Activated CD4-positive, alpha-beta memory T cell treated with anti-CD3 and anti-CD28 coated beads, Interleukin-2, amount 10 ng/mL, durations not matched to agents 7 days and 5 days (primary cell): ENCODE measurements at regions of chr19 and their contacts with region 1.

Region 1: DNA sequence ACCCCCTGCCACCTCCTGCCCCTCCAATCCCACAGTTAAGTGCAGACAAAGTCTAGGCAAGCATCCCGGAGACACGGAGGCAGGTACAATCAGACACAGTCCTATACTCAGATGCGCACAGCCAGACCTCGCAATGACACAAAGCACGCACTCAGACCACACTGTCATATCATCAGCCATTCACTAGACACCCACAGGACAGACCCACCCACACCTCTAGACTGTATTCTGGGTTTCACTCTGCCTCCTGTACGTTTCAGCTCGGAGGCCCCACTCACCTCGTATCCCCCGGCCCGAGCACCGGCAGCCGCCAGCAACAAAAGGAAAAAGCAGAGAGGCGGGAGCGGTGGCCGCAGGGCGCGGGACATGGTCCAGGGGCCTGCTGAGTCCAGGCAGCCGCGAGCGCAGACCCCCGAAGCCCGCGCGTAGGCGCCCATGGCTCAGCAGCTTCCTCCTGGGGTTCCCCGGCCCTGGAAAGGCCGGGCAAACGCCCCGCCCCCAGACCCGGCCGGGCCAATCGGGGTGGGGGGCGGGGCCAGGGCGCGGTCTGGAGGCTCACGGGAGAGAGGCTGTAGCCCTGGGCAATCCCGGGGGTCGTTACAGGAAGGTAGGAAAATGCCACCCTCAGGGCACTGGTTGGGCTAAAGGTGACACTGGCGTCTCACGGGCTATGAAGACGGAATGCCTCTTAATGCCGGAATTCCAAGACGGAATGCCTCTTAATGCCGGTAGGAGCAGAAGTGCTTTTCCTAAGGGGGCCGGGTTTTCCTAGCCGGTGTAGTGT is at the starts of genes MAN2B1 and WDR83:
- DNase-seq: peak; percentile 80
- H3K4me3 Mint-ChIP-seq: peak within 1 kb of the TSS; percentile 92
- H3K27ac Mint-ChIP-seq: peak within 1 kb of the TSS; percentile 97
- H3K4me1 Mint-ChIP-seq: peaks cover 64% of the 10 kb centered on the region
- H3K27me3 Mint-ChIP-seq: no peaks in the 10 kb centered on the region
- total RNA-seq, gene MAN2B1: 146 to 150 TPM
- total RNA-seq, gene WDR83: 16.9 to 21.3 TPM

Region 2: DNA sequence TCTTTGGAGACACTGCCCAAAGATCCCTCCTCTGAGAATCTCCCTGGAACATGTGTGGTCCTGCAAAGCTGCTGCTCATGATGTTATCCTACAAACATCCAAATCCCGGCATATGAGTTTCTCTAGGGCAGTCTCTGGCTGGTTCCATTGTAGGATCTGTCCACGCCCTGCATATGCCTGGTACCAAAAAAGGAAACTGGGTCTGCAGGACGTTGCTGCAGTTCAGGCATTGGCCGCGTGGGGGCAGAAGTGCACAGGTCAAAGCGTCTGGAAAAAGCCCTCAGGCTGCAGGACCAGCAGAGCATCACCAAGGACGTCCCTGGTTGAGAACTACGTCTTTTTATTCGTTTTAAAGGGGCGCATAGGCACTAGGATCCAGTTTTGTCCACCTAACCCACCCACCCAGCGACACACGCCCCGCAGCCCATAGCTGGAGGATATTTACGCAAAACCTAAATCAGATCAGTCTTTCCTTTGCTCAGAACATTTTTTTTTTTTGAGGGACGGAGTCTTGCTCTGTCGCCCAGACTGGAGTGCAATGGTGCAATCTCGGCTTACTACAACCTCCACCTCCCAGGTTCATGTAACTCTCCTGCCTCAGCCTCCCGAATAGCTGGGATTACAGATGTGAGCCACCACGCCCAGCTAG is 102.3 kb before region 1 on chr19:
- CTCF ChIA-PET with region 1: interaction called, 44 read pairs
- POLR2A ChIA-PET with region 1: interaction called, 4 read pairs
- DNase-seq: peak; percentile 93
- H3K4me3 Mint-ChIP-seq: no peak overlapping the region
- H3K27ac Mint-ChIP-seq: no peak overlapping the region
- H3K4me1 Mint-ChIP-seq: peaks cover 8% of the 10 kb centered on the region
- H3K27me3 Mint-ChIP-seq: peaks cover 2% of the 10 kb centered on the region